ENCODE measurements at regions of chr5 and their contacts with region 1.

Region 1: DNA sequence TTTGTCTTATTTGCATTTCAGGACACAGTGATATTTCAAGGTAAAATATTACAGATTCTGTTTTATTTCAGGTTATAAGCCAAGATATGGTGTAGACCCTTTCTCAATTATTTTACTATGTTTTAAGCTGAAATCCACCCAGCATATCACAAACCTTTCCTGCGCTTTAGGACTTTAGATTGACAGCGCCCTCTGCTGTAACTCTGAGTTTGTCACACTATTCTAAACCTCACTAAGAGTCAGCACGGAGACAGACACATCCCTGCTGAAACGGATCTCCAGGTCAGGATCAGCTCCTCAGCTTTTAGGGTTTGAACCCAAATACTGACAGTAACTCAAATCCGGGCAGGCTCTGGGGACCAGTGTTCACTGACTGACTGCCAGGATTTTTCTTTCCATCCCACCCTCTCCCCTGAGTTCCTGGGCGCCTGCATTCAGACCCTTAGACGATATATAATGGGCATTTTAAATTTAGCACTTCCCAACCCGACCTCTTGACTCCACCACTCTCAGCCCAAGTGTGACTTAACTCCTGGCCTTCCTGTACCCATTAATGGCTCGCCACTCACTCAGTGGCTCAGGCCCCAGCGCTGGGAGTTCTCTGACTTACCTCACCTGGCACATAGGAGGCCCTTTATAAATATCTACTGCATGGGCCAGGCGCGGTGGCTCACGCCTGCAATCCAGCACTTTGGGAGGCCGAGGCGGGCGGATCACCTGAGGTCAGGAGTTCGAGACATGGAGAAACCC is 33.5 kb downstream of the TLX3 start:
- DNase-seq: peak; percentile 40 to 76
- ATAC-seq: peak; percentile 96 to 98
- H3K4me3 ChIP-seq: no peak overlapping the region
- H3K27ac ChIP-seq: no peak overlapping the region
- H3K4me1 ChIP-seq: 0 out of 3 replicates have a peak, but pooled peaks cover 1% of the 10 kb centered on the region
- CTCF ChIP-seq: peak; percentile 84
- EP300 ChIP-seq: no peak
- POLR2A ChIP-seq: no peak
- RAD21 ChIP-seq: peak; percentile 64 to 81

Region 2: DNA sequence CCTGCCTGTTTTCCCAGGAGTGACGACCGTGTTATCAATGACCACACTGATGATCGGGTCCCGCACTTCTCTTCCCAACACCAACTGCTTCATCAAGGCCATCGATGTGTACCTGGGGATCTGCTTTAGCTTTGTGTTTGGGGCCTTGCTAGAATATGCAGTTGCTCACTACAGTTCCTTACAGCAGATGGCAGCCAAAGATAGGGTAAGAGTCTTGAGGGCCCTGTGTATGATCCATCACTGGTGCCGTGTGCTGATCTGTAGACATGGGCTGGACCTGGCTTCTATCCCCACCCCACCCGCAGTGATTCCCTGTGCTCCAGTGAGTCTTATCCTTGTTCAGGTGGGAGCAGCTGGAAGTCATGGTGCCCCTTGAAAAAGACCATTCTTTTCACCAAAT is 533.0 kb before region 1 on chr5:
- CTCF ChIA-PET with region 1: interaction called, 39 read pairs
- POLR2A ChIA-PET with region 1: no interaction called
- DNase-seq: peak; percentile 63 to 66
- ATAC-seq: peak; percentile 97
- H3K4me3 ChIP-seq: no peak overlapping the region
- H3K27ac ChIP-seq: no peak overlapping the region
- H3K4me1 ChIP-seq: no peaks in the 10 kb centered on the region
- CTCF ChIP-seq: peak; percentile 60
- EP300 ChIP-seq: no peak
- POLR2A ChIP-seq: no peak
- RAD21 ChIP-seq: peak; percentile 78 to 81

Region 3: DNA sequence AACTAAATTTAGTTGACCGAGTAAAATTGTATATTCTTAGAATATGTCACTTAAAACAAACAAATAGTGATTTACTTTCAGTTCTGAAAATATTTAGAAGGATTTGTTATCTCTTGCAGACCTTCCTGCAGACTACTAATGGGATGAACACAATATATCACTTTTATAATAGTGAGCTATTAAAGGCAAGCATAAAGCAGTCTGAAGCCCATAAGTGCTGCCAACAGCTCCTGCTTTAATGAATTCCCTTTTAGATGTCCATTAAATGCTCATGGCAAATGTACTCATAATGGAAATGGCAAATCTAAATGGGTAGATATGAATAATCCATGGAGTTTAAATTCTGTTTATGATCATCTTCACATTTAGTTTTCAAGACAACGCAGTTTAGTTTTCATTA is 310.6 kb before region 1 on chr5:
- CTCF ChIA-PET with region 1: no interaction called
- POLR2A ChIA-PET with region 1: no interaction called
- DNase-seq: no peak
- ATAC-seq: no peak
- H3K4me3 ChIP-seq: no peak overlapping the region
- H3K27ac ChIP-seq: no peak overlapping the region
- H3K4me1 ChIP-seq: no peaks in the 10 kb centered on the region
- CTCF ChIP-seq: no peak
- EP300 ChIP-seq: no peak
- POLR2A ChIP-seq: no peak
- RAD21 ChIP-seq: no peak

Region 4: GRCh38 chr5:171152382-171152781 is 190.2 kb before region 1 on chr5:
- CTCF ChIA-PET with region 1: no interaction called
- POLR2A ChIA-PET with region 1: no interaction called
- DNase-seq: peak; percentile 2 to 51
- ATAC-seq: peak; percentile 82 to 86
- H3K4me3 ChIP-seq: no peak overlapping the region
- H3K27ac ChIP-seq: no peak overlapping the region
- H3K4me1 ChIP-seq: no peaks in the 10 kb centered on the region
- CTCF ChIP-seq: peak; percentile 31
- EP300 ChIP-seq: no peak
- POLR2A ChIP-seq: no peak
- RAD21 ChIP-seq: peak; percentile 27 to 45; a peak in 3 of 5 replicates

Region 5: GRCh38 chr5:171258737-171259415 is 83.7 kb before region 1 on chr5:
- CTCF ChIA-PET with region 1: no interaction called
- POLR2A ChIA-PET with region 1: no interaction called
- DNase-seq: no peak
- ATAC-seq: no peak
- H3K4me3 ChIP-seq: no peak overlapping the region
- H3K27ac ChIP-seq: no peak overlapping the region
- H3K4me1 ChIP-seq: no peaks in the 10 kb centered on the region
- CTCF ChIP-seq: no peak
- EP300 ChIP-seq: no peak
- POLR2A ChIP-seq: no peak
- RAD21 ChIP-seq: no peak

Region 6: GRCh38 chr5:171323806-171324633 is 18.5 kb before region 1 on chr5:
- CTCF ChIA-PET with region 1: interaction called, 21 read pairs
- POLR2A ChIA-PET with region 1: no interaction called
- DNase-seq: no peak
- ATAC-seq: no peak
- H3K4me3 ChIP-seq: no peak overlapping the region
- H3K27ac ChIP-seq: no peak overlapping the region
- H3K4me1 ChIP-seq: no peaks in the 10 kb centered on the region
- CTCF ChIP-seq: no peak
- EP300 ChIP-seq: no peak
- POLR2A ChIP-seq: no peak
- RAD21 ChIP-seq: no peak

Region 7: GRCh38 chr5:171355302-171355724 is 12.8 kb after region 1 on chr5:
- CTCF ChIA-PET with region 1: interaction called, 28 read pairs
- POLR2A ChIA-PET with region 1: interaction called, 4 read pairs
- DNase-seq: no peak
- ATAC-seq: no peak
- H3K4me3 ChIP-seq: no peak overlapping the region
- H3K27ac ChIP-seq: no peak overlapping the region
- H3K4me1 ChIP-seq: no peaks in the 10 kb centered on the region
- CTCF ChIP-seq: no peak
- EP300 ChIP-seq: no peak
- POLR2A ChIP-seq: no peak
- RAD21 ChIP-seq: no peak

Region 8: GRCh38 chr5:171806976-171807747 is 464.6 kb after region 1 on chr5:
- CTCF ChIA-PET with region 1: no interaction called
- POLR2A ChIA-PET with region 1: no interaction called
- DNase-seq: no peak
- ATAC-seq: no peak
- H3K4me3 ChIP-seq: no peak overlapping the region
- H3K27ac ChIP-seq: no peak overlapping the region
- H3K4me1 ChIP-seq: no peaks in the 10 kb centered on the region
- CTCF ChIP-seq: no peak
- EP300 ChIP-seq: no peak
- POLR2A ChIP-seq: no peak
- RAD21 ChIP-seq: no peak